ENCODE measurements at regions of chr9 and their contacts with region 1.

Region 1: GRCh38 chr9:113737517-113738271 is 138.4 kb upstream of the ZNF618 start:
- DNase-seq: peak; percentile 70
- ATAC-seq: peak; percentile 73
- H3K4me3 Mint-ChIP-seq: no peak overlapping the region
- H3K27ac Mint-ChIP-seq: no peak overlapping the region
- H3K4me1 Mint-ChIP-seq: peaks cover 30% of the 10 kb centered on the region
- H3K27me3 Mint-ChIP-seq: peaks cover 3% of the 10 kb centered on the region; the same call in 1 of the 2 replicates
- CTCF ChIP-seq: peak; percentile 74

Region 2: DNA sequence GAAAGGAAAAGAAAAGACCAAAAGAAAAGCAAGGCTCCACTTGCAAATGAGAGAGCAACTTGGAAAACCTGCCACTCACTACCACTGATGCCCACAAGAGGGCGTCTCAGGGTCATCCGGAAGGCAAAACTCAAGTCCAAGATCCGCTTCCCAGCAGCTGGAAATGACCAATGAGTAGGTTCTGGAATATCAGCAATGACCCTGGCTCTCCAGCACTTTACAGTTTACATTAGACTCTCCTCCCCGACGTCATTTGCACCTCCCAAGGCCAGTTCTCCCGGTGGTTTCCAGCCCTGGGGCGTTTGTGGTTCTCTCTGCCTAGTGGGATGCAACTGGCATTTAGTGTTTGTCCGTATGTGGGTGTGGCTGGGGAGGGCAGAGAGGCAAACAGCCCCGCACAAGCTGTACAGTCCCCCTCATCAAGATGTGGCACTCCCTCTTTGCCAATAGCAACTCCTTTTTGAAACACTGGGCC is 55.4 kb before region 1 on chr9:
- CTCF ChIA-PET with region 1: interaction called, 11 read pairs
- POLR2A ChIA-PET with region 1: no interaction called
- DNase-seq: peak; percentile 87
- ATAC-seq: peak; percentile 59
- H3K4me3 Mint-ChIP-seq: no peak overlapping the region
- H3K27ac Mint-ChIP-seq: no peak overlapping the region; the same call in 1 of the 2 replicates
- H3K4me1 Mint-ChIP-seq: peaks cover 7% of the 10 kb centered on the region
- H3K27me3 Mint-ChIP-seq: peaks cover 38% of the 10 kb centered on the region
- CTCF ChIP-seq: peak; percentile 87

Region 3: DNA sequence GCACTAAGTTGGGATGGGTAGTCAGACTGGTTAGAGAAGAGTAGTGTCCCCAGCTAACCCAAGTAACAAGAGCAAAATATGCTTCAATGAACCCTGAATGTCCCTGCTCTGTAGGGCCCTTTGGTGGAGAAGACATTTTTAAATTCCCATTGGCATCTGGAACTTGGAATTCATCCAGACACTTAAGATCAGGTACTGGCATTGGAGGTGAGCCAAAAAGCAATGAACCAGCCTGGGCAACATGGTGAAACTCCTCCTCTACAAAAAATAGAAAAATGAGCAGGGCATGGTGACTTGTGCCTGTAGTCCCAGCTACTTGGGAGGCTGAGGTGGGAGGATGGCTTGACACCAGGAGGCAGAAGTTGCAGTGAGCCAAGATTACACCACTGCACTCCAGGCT is 79.5 kb after region 1 on chr9:
- CTCF ChIA-PET with region 1: no interaction called
- POLR2A ChIA-PET with region 1: no interaction called
- DNase-seq: no peak
- ATAC-seq: no peak
- H3K4me3 Mint-ChIP-seq: no peak overlapping the region
- H3K27ac Mint-ChIP-seq: no peak overlapping the region
- H3K4me1 Mint-ChIP-seq: no peaks in the 10 kb centered on the region
- H3K27me3 Mint-ChIP-seq: peaks cover 16% of the 10 kb centered on the region
- CTCF ChIP-seq: no peak

Region 4: GRCh38 chr9:113837334-113837733 is 99.6 kb after region 1 on chr9:
- CTCF ChIA-PET with region 1: no interaction called
- POLR2A ChIA-PET with region 1: no interaction called
- DNase-seq: no peak
- ATAC-seq: no peak
- H3K4me3 Mint-ChIP-seq: no peak overlapping the region
- H3K27ac Mint-ChIP-seq: no peak overlapping the region
- H3K4me1 Mint-ChIP-seq: no peaks in the 10 kb centered on the region
- H3K27me3 Mint-ChIP-seq: no peaks in the 10 kb centered on the region; the same call in 1 of the 2 replicates
- CTCF ChIP-seq: no peak

Region 5: DNA sequence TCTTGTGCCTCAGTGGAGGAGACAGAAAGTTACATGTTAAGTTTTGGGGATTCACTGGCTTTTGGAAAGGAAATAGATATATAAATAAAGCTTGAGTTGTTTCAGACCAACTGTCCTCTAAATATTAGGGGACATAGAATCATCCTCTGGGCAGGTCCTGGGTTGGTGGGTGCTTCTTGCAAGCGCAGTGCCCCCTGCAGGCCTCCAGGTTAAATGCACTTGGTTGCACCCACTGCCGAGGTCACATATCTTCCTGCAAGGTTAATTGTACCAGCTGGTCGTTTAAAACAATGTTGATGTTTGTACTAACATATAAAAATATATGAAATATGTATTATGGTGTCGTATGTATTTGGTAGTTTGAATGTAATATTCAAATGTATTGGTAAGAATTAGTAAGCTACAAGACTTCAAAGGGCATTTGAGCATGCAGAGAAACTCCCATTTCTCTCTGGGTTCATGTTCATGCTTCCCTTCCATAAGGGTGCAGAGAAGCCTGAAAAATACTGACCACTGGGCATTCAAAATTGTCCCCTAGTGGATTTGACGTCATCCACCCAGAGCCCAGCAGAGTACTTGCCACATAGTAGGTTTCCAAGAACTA is 225.4 kb after region 1 on chr9:
- CTCF ChIA-PET with region 1: interaction called, 11 read pairs
- POLR2A ChIA-PET with region 1: no interaction called
- DNase-seq: peak; percentile 78
- ATAC-seq: peak; percentile 82
- H3K4me3 Mint-ChIP-seq: no peak overlapping the region
- H3K27ac Mint-ChIP-seq: no peak overlapping the region
- H3K4me1 Mint-ChIP-seq: peaks cover 18% of the 10 kb centered on the region
- H3K27me3 Mint-ChIP-seq: no peaks in the 10 kb centered on the region
- CTCF ChIP-seq: peak; percentile 82

Region 6: GRCh38 chr9:114047717-114048116 is 310.0 kb after region 1 on chr9:
- CTCF ChIA-PET with region 1: interaction called, 15 read pairs
- POLR2A ChIA-PET with region 1: no interaction called
- DNase-seq: peak; percentile 33
- ATAC-seq: peak; percentile 95
- H3K4me3 Mint-ChIP-seq: no peak overlapping the region
- H3K27ac Mint-ChIP-seq: no peak overlapping the region
- H3K4me1 Mint-ChIP-seq: no peaks in the 10 kb centered on the region
- H3K27me3 Mint-ChIP-seq: no peaks in the 10 kb centered on the region
- CTCF ChIP-seq: no peak